Common myeloid progenitor, CD34-positive (primary cell): ENCODE measurements at regions of chr15 and their contacts with region 1.

Region 1: DNA sequence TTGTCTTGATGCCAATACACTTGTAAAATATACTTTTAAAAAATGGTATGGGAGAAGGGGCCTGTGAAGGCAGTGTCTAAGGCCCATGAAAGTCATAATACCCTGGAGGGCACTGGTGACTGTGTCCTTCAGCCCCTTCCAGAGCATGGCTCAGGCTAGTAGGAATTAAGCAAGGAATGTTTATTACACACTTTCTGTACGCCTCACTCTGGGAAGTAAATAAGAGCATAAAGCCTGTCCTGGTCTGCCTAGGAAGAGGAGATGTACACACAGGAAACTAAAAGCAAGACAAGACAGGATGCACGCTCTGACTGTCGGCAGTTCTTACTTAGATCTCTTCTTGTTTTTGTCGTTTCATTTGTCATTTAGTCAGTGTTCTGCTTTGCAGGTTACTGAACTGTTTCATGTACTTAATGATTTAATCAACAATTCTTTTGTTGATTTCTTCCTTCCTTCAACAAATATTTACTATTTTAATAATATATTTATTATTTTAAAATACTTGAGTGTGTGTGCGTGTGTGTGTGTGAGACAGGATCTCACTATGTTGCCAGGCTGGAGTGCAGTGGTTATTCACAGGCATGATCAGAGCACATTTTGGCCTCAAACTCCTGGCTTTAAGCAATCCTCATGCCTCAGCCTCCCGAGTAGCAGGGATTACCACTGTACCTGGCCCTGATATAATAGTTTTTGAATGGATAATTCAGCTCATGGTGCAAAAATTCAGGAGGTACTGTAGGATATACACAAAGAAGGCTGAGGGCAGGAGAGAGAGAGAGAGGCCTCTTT is 9.0 kb upstream of the SMAD6 start:
- DNase-seq: peak in 1 of 3 donors; percentile 30
- H3K4me3 ChIP-seq: no peak overlapping the region
- H3K27ac ChIP-seq: no peak overlapping the region
- H3K4me1 ChIP-seq: peaks cover 0 to 4% (median 1%) of the 10 kb centered on the region in 4 experiments
- H3K27me3 ChIP-seq: no peaks in the 10 kb centered on the region

Region 2: DNA sequence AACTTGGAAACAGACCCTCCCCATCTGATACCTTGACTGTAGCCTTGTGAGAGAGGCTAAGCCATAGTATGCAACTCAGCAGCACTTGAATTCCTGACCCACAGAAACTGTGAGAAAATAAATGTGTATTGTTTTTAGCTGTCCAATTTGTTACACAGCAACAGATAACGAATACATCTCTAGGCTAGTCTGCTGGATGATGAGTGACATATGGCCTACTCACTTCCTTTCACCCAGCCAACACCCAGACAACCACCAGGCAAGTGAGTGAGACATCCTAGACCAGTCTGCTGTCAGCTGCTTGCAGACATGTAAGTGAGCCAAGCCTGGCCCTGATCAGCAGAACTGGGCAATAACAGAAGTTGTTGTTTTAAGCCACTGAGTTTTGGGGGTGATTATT is 10.1 kb before region 1 on chr15:
- CTCF ChIA-PET with region 1: interaction called, 11 read pairs
- POLR2A ChIA-PET with region 1: no interaction called
- DNase-seq: peak in 1 of 3 donors; percentile 26
- H3K4me3 ChIP-seq: no peak overlapping the region
- H3K27ac ChIP-seq: no peak overlapping the region
- H3K4me1 ChIP-seq: peaks cover 0 to 6% (median 0%) of the 10 kb centered on the region in 4 experiments
- H3K27me3 ChIP-seq: no peaks in the 10 kb centered on the region